GM12878 (cell line): ENCODE measurements at regions of chr13 and their contacts with region 1.

Region 1: GRCh38 chr13:40445557-40445990 is 220.9 kb downstream of the FOXO1 start:
- DNase-seq: peak; percentile 99
- ATAC-seq: peak; percentile 99
- H3K4me3 ChIP-seq: no peak overlapping the region
- H3K27ac ChIP-seq: peak overlapping the region; percentile 42
- H3K4me1 ChIP-seq: peaks cover 13% of the 10 kb centered on the region
- H3K27me3 ChIP-seq: no peaks in the 10 kb centered on the region
- CTCF ChIP-seq: no peak
- EP300 ChIP-seq: peak; percentile 100
- POLR2A ChIP-seq: no peak
- RAD21 ChIP-seq: peak; percentile 35; the same call in 1 of the 2 replicates

Region 2: GRCh38 chr13:40422588-40423235 is 22.9 kb before region 1 on chr13:
- CTCF ChIA-PET with region 1: interaction called, 4 read pairs
- POLR2A ChIA-PET with region 1: interaction called, 3 read pairs
- RAD21 ChIA-PET with region 1: interaction called, 3 read pairs
- SMC1A ChIA-PET with region 1: interaction called, 4 read pairs
- in situ Hi-C with region 1: no loop called
- intact Hi-C with region 1: loop called (anchors 1 kb)
- DNase-seq: no peak
- ATAC-seq: peak; percentile 12; the same call in 1 of the 3 replicates
- H3K4me3 ChIP-seq: no peak overlapping the region
- H3K27ac ChIP-seq: no peak overlapping the region
- H3K4me1 ChIP-seq: peaks cover 17% of the 10 kb centered on the region
- H3K27me3 ChIP-seq: no peaks in the 10 kb centered on the region
- CTCF ChIP-seq: no peak
- EP300 ChIP-seq: no peak
- POLR2A ChIP-seq: no peak
- RAD21 ChIP-seq: no peak

Region 3: DNA sequence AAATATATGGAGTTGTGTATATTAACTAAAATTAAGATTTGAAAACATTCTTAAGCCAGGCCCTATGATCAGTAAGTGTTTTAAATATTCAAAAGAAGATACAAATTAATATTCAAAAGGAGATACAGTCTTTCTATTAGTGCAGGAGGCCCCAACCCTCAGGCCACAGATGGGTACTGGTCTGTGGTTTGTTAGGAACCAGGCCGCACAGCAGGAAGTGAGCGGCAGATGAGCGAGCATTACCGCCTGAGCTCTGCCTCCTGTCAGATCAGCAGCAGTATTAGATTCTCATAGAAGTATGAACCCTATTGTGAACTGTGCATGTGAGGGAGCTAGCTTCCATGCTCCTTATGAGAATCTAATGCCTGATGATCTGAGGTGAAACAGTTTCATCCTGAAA is 12.0 kb before region 1 on chr13:
- CTCF ChIA-PET with region 1: interaction called, 8 read pairs
- POLR2A ChIA-PET with region 1: interaction called, 4 read pairs
- RAD21 ChIA-PET with region 1: interaction called, 9 read pairs
- SMC1A ChIA-PET with region 1: interaction called, 24 read pairs
- in situ Hi-C with region 1: no loop called
- intact Hi-C with region 1: no loop called
- DNase-seq: no peak
- ATAC-seq: peak; percentile 65
- H3K4me3 ChIP-seq: no peak overlapping the region
- H3K27ac ChIP-seq: no peak overlapping the region
- H3K4me1 ChIP-seq: peaks cover 19% of the 10 kb centered on the region
- H3K27me3 ChIP-seq: no peaks in the 10 kb centered on the region
- CTCF ChIP-seq: no peak
- EP300 ChIP-seq: no peak
- POLR2A ChIP-seq: no peak
- RAD21 ChIP-seq: no peak

Region 4: DNA sequence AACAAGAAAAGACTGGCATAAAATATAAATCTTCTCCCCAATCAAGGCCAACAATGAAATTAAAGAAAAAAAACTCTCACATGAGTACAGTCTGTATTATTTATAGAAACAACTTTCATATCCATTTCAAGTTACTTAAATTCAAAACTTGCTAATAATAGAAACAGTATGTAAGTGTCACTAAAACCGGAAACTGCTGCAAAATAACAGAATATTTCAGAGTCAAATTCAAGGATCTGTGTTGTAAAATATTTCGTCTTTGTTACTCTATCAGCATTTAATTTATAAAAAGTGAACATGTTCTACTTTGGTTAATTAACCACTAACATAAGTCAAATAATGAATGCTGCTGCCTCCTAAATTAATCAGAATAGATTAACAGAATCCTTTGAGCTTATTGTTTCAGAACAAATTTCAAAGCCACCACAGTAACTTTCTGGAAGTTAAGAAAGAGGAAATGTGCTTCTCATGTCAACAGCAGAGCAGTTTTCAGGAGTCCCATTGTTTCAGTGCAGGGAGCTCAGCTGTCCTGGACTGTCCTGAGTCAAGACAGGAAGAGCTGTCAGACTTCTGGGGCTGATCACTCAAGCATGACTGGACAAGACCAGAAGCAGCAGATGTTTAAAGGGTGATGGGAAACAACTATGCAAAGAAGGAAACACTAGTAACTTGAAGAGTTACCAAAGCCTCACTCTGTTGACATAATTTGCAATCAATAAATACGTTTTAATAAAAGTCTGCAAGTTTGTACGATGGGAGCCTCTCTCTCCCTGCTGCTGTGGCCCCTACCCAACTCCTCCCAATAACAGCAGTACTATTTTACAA is 143.9 kb after region 1 on chr13:
- CTCF ChIA-PET with region 1: no interaction called
- POLR2A ChIA-PET with region 1: no interaction called
- RAD21 ChIA-PET with region 1: no interaction called
- SMC1A ChIA-PET with region 1: no interaction called
- in situ Hi-C with region 1: no loop called
- intact Hi-C with region 1: loop called (anchors 5 kb)
- DNase-seq: peak; percentile 88
- ATAC-seq: peak; percentile 95
- H3K4me3 ChIP-seq: 0 out of 2 replicates have a peak overlapping the region, but pooled peaks have one; percentile 13
- H3K27ac ChIP-seq: peak overlapping the region; percentile 63
- H3K4me1 ChIP-seq: peaks cover 40% of the 10 kb centered on the region
- H3K27me3 ChIP-seq: no peaks in the 10 kb centered on the region
- CTCF ChIP-seq: no peak
- EP300 ChIP-seq: peak; percentile 33 to 79; a peak in 3 of 4 replicates
- POLR2A ChIP-seq: no peak
- RAD21 ChIP-seq: no peak